Natural killer cell (primary cell): ENCODE measurements at regions of chr21 and their contacts with region 1.

Region 1: GRCh38 chr21:42684109-42684916 is 30.9 kb downstream of the PDE9A start:
- DNase-seq: peak; percentile 57 to 69
- ATAC-seq: peak; percentile 77 to 81 (median 78)
- H3K4me3 ChIP-seq: no peak overlapping the region
- H3K4me3 Mint-ChIP-seq: peak overlapping the region; percentile 85
- H3K27ac ChIP-seq: peak overlapping the region; percentile 65
- H3K27ac Mint-ChIP-seq: peak overlapping the region; percentile 83 to 94
- H3K4me1 ChIP-seq: peaks cover 58% of the 10 kb centered on the region
- H3K4me1 Mint-ChIP-seq: peaks cover 42 to 44% of the 10 kb centered on the region in 2 donors
- H3K27me3 ChIP-seq: peaks cover 2% of the 10 kb centered on the region
- H3K27me3 Mint-ChIP-seq: peaks cover 0 to 4% of the 10 kb centered on the region in 2 donors
- CTCF ChIP-seq: no peak

Region 2: GRCh38 chr21:42009831-42010523 is 674.3 kb before region 1 on chr21 and contains the start of gene ZBTB21:
- intact Hi-C with region 1: no loop called
- DNase-seq: peak; percentile 96 to 100
- ATAC-seq: peak; percentile 75 to 89 (median 79)
- H3K4me3 ChIP-seq: peak within 1 kb of the TSS; percentile 97
- H3K4me3 Mint-ChIP-seq: peak within 1 kb of the TSS; percentile 94
- H3K27ac ChIP-seq: peak within 1 kb of the TSS; percentile 100
- H3K27ac Mint-ChIP-seq: peak within 1 kb of the TSS; percentile 95 to 98
- H3K4me1 ChIP-seq: peaks cover 15% of the 10 kb centered on the region
- H3K4me1 Mint-ChIP-seq: peaks cover 6 to 20% of the 10 kb centered on the region in 2 donors
- H3K27me3 ChIP-seq: no peaks in the 10 kb centered on the region
- H3K27me3 Mint-ChIP-seq: peaks cover 0 to 11% of the 10 kb centered on the region in 2 donors
- CTCF ChIP-seq: no peak
- total RNA-seq, gene ZBTB21: 78.2 to 113 (median 100) TPM

Region 3: GRCh38 chr21:42614811-42615659 is 69.3 kb before region 1 on chr21:
- intact Hi-C with region 1: loop called (anchors 2 kb)
- DNase-seq: peak; percentile 29 to 81
- ATAC-seq: peak; percentile 58 to 78 (median 77)
- H3K4me3 ChIP-seq: no peak overlapping the region
- H3K4me3 Mint-ChIP-seq: no peak overlapping the region
- H3K27ac ChIP-seq: peak overlapping the region; percentile 4
- H3K27ac Mint-ChIP-seq: no peak overlapping the region
- H3K4me1 ChIP-seq: peaks cover 31% of the 10 kb centered on the region
- H3K4me1 Mint-ChIP-seq: peaks cover 0 to 4% of the 10 kb centered on the region in 2 donors
- H3K27me3 ChIP-seq: peaks cover 6% of the 10 kb centered on the region
- H3K27me3 Mint-ChIP-seq: peaks cover 6 to 18% of the 10 kb centered on the region in 2 donors
- CTCF ChIP-seq: no peak

Region 4: DNA sequence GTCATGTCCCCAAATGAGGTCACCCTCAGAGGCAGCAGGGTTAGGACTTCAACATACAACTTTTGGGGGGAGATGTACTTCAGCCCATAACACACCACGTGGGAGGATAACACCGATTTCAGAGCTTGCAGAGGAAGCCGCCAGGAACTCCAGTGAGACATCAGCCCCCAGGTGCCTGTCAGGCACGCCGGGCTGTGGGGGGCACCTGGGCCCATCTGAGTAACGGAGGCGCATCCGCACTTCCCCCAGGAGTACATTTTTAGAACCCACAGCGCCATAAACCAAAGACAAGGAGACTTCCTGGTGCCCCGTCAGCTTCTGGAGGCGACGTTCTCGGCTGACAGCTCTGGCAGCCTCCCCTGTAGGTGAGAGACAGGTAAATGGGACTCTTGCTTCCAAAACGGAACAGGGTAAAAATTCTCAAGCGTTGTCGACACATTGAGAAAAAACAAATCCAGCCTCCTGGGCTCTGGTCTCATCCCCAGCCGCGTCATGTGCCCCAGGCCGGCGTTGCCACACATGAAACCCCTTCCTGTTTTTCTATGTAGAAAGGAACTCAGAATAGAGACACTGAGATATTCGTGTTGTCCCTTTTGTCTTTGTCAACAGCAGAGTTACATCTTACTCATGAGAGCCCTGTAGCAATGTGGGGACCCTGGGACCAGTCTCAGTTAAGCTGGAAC is 62.4 kb after region 1 on chr21:
- intact Hi-C with region 1: loop called (anchors 5 kb)
- DNase-seq: peak in 1 of 2 donors; percentile 74
- ATAC-seq: peak; percentile 68 to 76 (median 72)
- H3K4me3 ChIP-seq: peak overlapping the region; percentile 22
- H3K4me3 Mint-ChIP-seq: peak overlapping the region; percentile 72
- H3K27ac ChIP-seq: peak overlapping the region; percentile 57
- H3K27ac Mint-ChIP-seq: peak overlapping the region; percentile 78 to 84
- H3K4me1 ChIP-seq: peaks cover 27% of the 10 kb centered on the region
- H3K4me1 Mint-ChIP-seq: peaks cover 14 to 19% of the 10 kb centered on the region in 2 donors
- H3K27me3 ChIP-seq: no peaks in the 10 kb centered on the region
- H3K27me3 Mint-ChIP-seq: no peaks in the 10 kb centered on the region
- CTCF ChIP-seq: no peak